Body of pancreas (tissue), 4 donors: ENCODE measurements at regions of chr6 and their contacts with region 1.

Region 1: DNA sequence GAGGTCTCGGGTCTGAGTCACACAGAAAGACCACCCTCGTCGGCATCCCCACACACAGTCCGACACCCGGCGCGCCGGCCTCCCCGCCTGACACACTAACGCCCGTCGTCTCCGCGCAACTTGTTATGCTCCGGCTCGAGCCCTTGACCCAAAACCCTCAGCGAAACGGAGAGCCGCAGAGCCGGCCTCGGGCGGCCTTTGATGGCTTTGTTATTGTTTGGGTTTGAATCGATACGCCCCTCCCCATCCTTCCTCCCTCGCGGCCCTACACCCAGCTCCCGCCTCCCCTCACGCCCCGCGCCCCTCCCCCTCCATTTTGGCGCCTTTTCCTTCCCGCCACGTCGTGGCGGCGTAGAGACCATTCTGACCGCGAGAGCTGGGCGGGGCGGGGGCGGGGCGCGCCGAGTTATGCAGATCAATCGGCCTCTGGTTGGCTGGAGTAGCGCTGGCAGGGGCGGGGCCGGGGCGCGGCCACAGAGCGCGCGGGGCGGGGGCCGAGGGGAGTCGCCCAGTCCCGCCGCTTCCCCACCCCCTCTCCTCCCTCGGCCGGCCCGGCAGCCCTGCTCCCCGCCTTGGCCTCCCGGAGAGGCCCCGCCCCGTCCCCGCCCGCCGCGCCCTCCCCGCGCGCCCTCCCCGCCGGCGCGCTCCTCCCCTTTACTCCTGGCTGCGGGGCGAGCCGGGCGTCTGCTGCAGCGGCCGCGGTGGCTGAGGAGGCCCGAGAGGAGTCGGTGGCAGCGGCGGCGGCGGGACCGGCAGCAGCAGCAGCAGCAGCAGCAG is at the start of gene PIM1:
- DNase-seq: peak; percentile 99 to 100 (median 100)
- ATAC-seq: peak; percentile 89
- H3K4me3 ChIP-seq: peak within 1 kb of the TSS; percentile 44 to 85
- H3K27ac ChIP-seq: peak within 1 kb of the TSS; percentile 88 to 93 (median 90)
- H3K4me1 ChIP-seq: peaks cover 28% of the 10 kb centered on the region
- H3K27me3 ChIP-seq: no peaks in the 10 kb centered on the region
- CTCF ChIP-seq: peak in 1 of 7 experiments; percentile 6
- POLR2A ChIP-seq: peak; percentile 74 to 92 (median 76)
- total RNA-seq, gene PIM1: 7.3 to 10.6 TPM

Region 2: DNA sequence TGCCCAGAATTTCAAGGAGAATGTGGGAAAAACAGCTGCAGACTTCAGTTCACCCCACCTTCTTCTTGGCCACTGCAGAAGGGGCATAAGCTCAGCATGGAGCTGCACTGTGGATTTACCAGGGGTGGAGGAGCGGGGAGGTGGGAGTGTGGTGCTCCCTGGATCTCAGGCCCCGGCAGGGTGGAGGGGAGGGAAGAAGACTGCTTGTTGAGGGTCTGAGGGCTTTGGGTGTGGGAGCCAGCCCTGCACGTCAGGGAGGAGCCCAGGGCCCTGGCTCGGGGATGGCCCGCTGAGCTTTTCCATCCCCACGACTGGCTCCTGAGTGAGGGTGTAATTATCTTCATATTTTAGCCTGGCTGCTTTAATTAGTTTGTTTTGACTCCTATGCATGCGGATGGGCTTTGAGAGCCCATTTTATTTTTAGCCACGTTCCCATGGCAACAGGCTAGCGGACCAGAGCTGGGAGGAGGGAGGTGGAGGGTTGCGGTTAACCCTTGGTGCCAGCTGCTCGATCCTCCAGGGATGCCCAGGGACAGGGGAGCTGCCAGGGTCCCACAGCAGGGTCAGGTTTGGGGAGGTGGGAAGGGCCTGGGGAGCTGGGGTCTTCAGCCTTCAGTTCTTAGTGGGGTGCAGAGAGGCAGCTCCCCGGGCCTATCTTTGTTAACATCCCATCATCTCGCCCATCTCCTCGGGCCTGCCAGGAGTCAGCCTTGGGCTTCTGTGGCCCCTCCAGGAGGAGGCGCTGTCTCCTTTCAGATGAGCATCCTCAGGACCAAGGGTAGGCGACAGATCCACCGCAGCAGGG is 403.9 kb before region 1 on chr6:
- intact Hi-C with region 1: loop called (anchors 10 kb)
- DNase-seq: peak; percentile 86 to 90 (median 88)
- ATAC-seq: peak; percentile 85
- H3K4me3 ChIP-seq: no peak overlapping the region
- H3K27ac ChIP-seq: no peak overlapping the region
- H3K4me1 ChIP-seq: peaks cover 12% of the 10 kb centered on the region
- H3K27me3 ChIP-seq: no peaks in the 10 kb centered on the region
- CTCF ChIP-seq: peak; percentile 71 to 96 (median 91)
- POLR2A ChIP-seq: no peak

Region 3: GRCh38 chr6:36929607-36930006 is 240.1 kb before region 1 on chr6:
- intact Hi-C with region 1: no loop called
- DNase-seq: peak in 1 of 4 donors; percentile 21
- ATAC-seq: no peak
- H3K4me3 ChIP-seq: no peak overlapping the region
- H3K27ac ChIP-seq: no peak overlapping the region
- H3K4me1 ChIP-seq: no peaks in the 10 kb centered on the region
- H3K27me3 ChIP-seq: no peaks in the 10 kb centered on the region
- CTCF ChIP-seq: no peak
- POLR2A ChIP-seq: no peak

Region 4: DNA sequence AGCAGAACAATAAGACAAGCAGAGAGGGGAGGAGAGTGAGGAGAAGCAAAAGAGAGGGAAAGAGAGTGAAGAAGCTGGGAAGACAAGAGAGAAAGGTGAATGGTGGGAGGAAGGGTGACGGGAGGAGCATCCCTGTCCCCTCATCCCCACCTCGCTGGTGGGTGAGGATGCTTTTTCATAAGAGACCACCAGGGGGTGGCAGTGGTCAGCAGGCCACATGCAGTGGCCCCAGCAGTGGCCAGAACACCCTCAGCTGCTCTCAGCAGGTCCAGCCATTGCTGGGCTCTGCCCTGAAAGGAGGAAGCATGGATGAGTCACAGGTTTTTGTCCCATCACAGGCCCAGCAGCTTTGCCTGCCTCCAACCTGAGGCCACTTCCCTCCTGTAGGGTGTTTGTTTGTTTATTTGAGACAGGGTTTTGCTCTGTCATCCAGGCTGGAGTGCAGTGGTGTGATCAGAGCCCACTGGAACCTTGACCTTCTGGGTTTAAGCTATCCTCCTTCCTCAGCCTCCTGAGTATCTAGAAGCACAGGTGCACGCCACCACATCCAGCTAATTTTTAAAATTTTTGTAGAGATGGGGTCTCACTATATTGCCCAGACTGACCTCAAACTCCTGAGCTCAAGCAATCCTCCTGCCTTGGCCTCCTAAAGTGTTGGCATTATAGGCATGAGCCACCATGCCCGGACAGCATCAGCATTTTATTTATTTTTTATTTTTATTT is 140.3 kb before region 1 on chr6:
- intact Hi-C with region 1: loop called (anchors 5 kb)
- DNase-seq: peak; percentile 73 to 89 (median 85)
- ATAC-seq: peak; percentile 91
- H3K4me3 ChIP-seq: no peak overlapping the region
- H3K27ac ChIP-seq: peak overlapping the region in 1 of 4 donors; percentile 39
- H3K4me1 ChIP-seq: peaks cover 8% of the 10 kb centered on the region
- H3K27me3 ChIP-seq: no peaks in the 10 kb centered on the region
- CTCF ChIP-seq: peak; percentile 54 to 89 (median 85)
- POLR2A ChIP-seq: no peak

Region 5: GRCh38 chr6:37059344-37060206 is 110.1 kb before region 1 on chr6:
- intact Hi-C with region 1: loop called (anchors 5 kb)
- DNase-seq: peak in 2 of 4 donors; percentile 30 to 67
- ATAC-seq: peak; percentile 57
- H3K4me3 ChIP-seq: no peak overlapping the region
- H3K27ac ChIP-seq: peak overlapping the region in 1 of 4 donors; percentile 31
- H3K4me1 ChIP-seq: peaks cover 15% of the 10 kb centered on the region
- H3K27me3 ChIP-seq: no peaks in the 10 kb centered on the region
- CTCF ChIP-seq: peak in 3 of 7 experiments; percentile 13 to 26 (median 23)
- POLR2A ChIP-seq: no peak

Region 6: DNA sequence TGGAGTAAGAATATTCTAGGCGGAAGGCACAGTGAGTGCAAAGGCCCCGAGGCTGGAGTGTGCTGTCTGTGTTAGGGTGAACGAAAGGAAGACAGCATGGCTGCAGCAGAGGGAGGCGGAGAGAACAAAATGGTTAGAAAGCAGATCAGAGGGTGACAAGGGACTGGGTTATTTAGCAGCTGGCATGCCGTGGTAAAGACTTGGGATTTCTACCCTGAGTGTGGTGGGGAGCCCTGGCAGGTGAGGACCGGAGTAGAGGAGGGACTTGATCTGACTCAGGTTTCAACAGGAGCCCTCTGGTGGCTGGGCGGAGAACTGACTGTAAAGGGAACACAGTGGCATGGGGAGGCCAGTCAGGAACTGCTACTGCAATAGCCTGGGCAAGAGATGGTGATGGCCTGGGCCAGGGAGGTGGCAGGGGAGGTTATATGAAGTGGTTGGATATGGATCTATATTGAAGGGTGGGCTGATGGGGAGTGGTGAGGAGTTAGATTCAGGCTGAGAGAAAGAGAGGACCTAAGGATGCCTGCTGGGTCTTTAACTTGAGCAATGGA is 38.3 kb after region 1 on chr6:
- intact Hi-C with region 1: loop called (anchors 5 kb)
- DNase-seq: peak; percentile 80 to 87 (median 86)
- ATAC-seq: peak; percentile 72
- H3K4me3 ChIP-seq: no peak overlapping the region
- H3K27ac ChIP-seq: no peak overlapping the region
- H3K4me1 ChIP-seq: peaks cover 5% of the 10 kb centered on the region
- H3K27me3 ChIP-seq: no peaks in the 10 kb centered on the region
- CTCF ChIP-seq: peak; percentile 31 to 79 (median 61)
- POLR2A ChIP-seq: no peak

Region 7: DNA sequence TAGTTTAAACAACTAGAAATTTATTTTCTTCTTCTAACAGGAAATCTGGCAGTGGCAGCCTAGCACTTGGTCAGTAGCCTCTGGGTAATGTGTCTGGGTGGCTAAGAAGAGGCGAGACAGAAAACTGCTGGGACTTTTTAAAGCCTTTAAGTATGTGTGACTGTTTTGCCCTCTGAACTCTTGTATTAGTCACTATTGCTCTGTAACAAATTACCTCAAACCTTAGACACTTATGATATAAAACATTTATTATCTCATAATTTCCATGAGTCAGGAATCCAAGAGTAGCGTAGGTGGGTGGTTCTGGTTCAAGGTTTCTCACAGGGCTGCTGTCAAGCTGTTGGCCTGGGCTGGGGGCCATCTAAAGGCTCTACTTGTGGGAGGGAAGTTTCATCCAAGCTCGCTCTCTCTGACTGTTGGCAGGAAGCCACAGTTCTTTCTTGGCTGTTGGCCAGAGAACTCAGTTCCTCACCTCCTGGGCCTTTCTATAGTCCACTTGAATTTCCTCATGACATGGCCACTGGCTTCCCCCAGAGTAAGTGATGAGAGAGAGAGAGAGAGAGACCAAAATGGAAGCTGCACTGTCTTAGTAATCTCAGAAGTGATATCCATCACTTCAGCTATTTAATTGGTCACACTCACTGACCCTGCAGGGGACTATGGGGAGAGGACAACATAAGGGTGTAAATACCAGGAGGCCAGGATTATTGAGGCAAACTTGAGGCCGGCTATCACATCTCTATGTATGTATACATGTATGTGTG is 70.4 kb after region 1 on chr6:
- intact Hi-C with region 1: no loop called
- DNase-seq: peak; percentile 83 to 88 (median 86)
- ATAC-seq: peak; percentile 49
- H3K4me3 ChIP-seq: no peak overlapping the region
- H3K27ac ChIP-seq: peak overlapping the region; percentile 4 to 72 (median 52)
- H3K4me1 ChIP-seq: peaks cover 41% of the 10 kb centered on the region
- H3K27me3 ChIP-seq: no peaks in the 10 kb centered on the region
- CTCF ChIP-seq: no peak
- POLR2A ChIP-seq: no peak